Caco-2 (cell line): ENCODE measurements at regions of chr4 and their contacts with region 1.

Region 1: DNA sequence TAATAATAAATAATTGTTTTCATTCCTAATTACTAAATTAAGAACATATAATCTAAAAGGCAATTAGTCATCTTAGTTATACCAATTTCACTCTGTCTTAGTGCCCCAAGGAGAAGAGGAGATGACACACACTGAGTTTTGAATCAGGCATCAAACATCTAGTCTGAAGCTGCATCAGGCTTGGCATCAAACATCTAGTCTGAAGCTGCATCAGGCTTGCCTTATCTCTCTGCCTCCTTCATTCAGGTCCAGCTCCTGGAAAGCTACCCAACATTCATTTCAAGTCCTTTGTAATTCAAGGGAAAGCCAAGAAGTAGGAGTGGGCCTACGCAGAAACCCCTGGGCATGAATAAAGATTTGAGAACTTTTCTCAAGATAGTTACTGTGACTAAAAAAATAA is 62.2 kb downstream of the SH3RF1 start:
- DNase-seq: no peak
- H3K4me3 ChIP-seq: no peak overlapping the region
- H3K4me3 Mint-ChIP-seq: peak overlapping the region; percentile 51
- H3K27ac Mint-ChIP-seq: peak overlapping the region; percentile 11
- H3K4me1 ChIP-seq: peaks cover 41% of the 10 kb centered on the region
- H3K4me1 Mint-ChIP-seq: peaks cover 32% of the 10 kb centered on the region
- H3K27me3 ChIP-seq: no peaks in the 10 kb centered on the region
- H3K27me3 Mint-ChIP-seq: no peaks in the 10 kb centered on the region
- CTCF ChIP-seq: no peak

Region 2: DNA sequence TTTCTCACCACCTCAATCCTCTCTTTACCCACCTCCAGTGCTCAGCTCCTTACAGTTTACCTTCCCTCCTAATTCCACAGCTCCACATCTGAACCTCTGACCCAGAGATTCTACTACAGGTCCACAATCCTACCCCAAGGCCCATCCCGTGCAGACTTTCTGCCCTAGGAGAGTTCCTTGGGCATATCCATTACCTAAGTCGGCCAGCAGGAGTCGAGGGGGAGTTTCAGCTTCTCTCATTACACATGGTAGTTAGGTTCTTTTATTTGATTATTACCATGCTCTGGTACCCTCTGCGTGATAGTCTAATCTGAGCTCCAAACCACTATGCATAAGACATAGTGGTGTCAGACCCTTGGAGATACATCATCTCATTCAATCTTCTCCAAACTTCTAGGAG is 55.6 kb before region 1 on chr4:
- CTCF ChIA-PET with region 1: no interaction called
- POLR2A ChIA-PET with region 1: no interaction called
- intact Hi-C with region 1: loop called (anchors 2 kb)
- DNase-seq: no peak
- H3K4me3 ChIP-seq: no peak overlapping the region
- H3K4me3 Mint-ChIP-seq: no peak overlapping the region
- H3K27ac Mint-ChIP-seq: peak overlapping the region; percentile 74
- H3K4me1 ChIP-seq: peaks cover 44% of the 10 kb centered on the region
- H3K4me1 Mint-ChIP-seq: peaks cover 19% of the 10 kb centered on the region
- H3K27me3 ChIP-seq: no peaks in the 10 kb centered on the region
- H3K27me3 Mint-ChIP-seq: no peaks in the 10 kb centered on the region
- CTCF ChIP-seq: no peak

Region 3: GRCh38 chr4:169251291-169252235 is 43.0 kb after region 1 on chr4:
- CTCF ChIA-PET with region 1: interaction called, 3 read pairs
- POLR2A ChIA-PET with region 1: no interaction called
- intact Hi-C with region 1: loop called (anchors 1 kb)
- DNase-seq: peak; percentile 68
- H3K4me3 ChIP-seq: no peak overlapping the region; the same call in 1 of the 2 replicates
- H3K4me3 Mint-ChIP-seq: peak overlapping the region; percentile 70
- H3K27ac Mint-ChIP-seq: peak overlapping the region; percentile 98
- H3K4me1 ChIP-seq: peaks cover 75% of the 10 kb centered on the region
- H3K4me1 Mint-ChIP-seq: peaks cover 72% of the 10 kb centered on the region
- H3K27me3 ChIP-seq: no peaks in the 10 kb centered on the region
- H3K27me3 Mint-ChIP-seq: no peaks in the 10 kb centered on the region
- CTCF ChIP-seq: no peak